Tibial artery (tissue), 4 donors: ENCODE measurements at regions of chr1 and their contacts with region 1.

Region 1: DNA sequence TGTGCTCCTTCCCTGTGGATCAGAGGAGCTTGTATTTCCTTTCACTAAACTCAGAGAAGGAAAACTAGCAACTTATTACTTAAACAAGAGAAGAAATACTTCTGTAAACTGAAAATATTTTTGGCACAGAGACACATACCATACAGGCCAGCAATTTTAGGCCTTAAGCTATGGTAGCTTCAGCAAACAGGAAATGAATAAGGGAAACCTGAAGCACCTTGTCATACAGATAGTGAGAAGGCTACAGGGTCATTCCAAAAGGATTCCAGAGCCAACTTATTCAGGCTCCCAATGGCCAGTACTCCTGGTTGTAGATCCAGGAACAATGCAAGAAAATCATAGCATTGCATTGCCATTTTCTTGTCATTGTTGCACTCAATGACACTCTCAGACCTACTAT is 9.1 kb upstream of the KYAT3 start:
- DNase-seq: no peak
- H3K4me3 ChIP-seq: no peak overlapping the region
- H3K27ac ChIP-seq: no peak overlapping the region
- H3K4me1 ChIP-seq: peaks cover 0 to 10% (median 3%) of the 10 kb centered on the region in 4 donors
- H3K27me3 ChIP-seq: no peaks in the 10 kb centered on the region
- CTCF ChIP-seq: no peak

Region 2: GRCh38 chr1:89068291-89068690 is 66.8 kb after region 1 on chr1:
- intact Hi-C with region 1: no loop called
- DNase-seq: no peak
- H3K4me3 ChIP-seq: no peak overlapping the region
- H3K27ac ChIP-seq: no peak overlapping the region
- H3K4me1 ChIP-seq: peaks cover 0 to 12% (median 0%) of the 10 kb centered on the region in 4 donors
- H3K27me3 ChIP-seq: no peaks in the 10 kb centered on the region
- CTCF ChIP-seq: no peak

Region 3: DNA sequence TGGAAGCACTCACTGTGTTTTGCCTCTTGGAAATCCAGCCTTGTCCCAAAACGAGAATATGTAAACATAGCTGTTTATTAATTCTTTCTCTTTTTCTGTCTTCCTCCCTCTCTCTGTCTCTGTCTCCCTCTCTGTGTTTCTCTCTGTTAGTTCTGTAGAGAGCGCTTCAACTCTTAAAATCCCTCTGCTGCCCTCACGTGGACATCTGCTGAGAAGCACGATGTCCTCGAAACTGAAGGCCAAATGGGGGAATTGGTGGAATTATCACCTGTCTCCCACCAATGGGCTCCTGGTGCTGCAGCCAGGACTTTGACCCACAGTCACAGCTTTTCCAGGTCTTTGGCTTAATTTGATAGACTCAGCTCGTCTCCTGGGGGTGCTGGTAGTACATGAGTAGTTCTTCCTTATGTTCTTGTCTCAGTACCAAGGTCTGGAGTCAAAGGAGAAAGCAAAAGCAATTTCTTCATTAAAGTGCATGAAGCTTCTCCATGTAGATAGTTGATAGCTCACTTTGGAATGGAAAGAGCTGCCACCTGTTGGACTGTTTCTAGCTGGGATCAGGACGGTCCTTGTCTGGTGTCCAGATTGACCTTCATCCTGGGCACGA is 356.9 kb after region 1 on chr1:
- intact Hi-C with region 1: loop called (anchors 10 kb)
- DNase-seq: peak; percentile 80 to 84
- H3K4me3 ChIP-seq: no peak overlapping the region
- H3K27ac ChIP-seq: no peak overlapping the region
- H3K4me1 ChIP-seq: peaks cover 0 to 11% (median 3%) of the 10 kb centered on the region in 4 donors
- H3K27me3 ChIP-seq: no peaks in the 10 kb centered on the region
- CTCF ChIP-seq: peak; percentile 79 to 80

Region 4: DNA sequence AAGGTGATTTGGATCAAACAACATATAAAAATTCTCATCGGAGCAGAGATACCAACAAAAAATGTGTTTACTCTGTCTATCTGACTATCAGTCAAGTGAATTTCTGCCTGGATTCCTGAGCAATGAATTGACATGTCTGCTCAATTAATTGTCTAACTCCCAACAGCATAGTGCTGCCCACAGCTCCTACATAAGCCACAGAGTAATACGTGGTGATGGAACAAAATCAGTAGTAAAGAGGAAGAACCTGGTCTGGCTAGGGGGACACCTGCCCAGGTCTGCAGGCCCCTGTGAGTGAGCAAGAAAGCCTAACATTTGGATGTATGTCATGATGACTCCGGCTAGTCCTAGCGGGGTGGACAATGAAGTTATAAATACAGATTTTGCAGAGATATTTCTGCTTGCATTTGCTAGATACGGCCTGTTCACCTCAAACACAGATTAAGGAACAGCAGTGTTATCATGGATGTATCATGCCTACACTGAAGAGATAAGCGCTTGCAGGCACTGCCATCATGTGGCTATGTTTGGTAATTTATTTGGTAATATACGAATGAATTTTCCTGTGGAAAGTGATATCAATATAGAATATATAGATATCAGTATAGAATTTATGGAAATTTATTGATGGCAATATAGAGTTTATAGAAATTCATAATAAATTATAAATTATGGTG is 453.5 kb after region 1 on chr1:
- intact Hi-C with region 1: loop called (anchors 10 kb)
- DNase-seq: peak in 1 of 2 donors; percentile 28
- H3K4me3 ChIP-seq: no peak overlapping the region
- H3K27ac ChIP-seq: no peak overlapping the region
- H3K4me1 ChIP-seq: no peaks in the 10 kb centered on the region
- H3K27me3 ChIP-seq: no peaks in the 10 kb centered on the region
- CTCF ChIP-seq: peak; percentile 55 to 64